ENCODE measurements at regions of chr11 and their contacts with region 1.

Region 1: DNA sequence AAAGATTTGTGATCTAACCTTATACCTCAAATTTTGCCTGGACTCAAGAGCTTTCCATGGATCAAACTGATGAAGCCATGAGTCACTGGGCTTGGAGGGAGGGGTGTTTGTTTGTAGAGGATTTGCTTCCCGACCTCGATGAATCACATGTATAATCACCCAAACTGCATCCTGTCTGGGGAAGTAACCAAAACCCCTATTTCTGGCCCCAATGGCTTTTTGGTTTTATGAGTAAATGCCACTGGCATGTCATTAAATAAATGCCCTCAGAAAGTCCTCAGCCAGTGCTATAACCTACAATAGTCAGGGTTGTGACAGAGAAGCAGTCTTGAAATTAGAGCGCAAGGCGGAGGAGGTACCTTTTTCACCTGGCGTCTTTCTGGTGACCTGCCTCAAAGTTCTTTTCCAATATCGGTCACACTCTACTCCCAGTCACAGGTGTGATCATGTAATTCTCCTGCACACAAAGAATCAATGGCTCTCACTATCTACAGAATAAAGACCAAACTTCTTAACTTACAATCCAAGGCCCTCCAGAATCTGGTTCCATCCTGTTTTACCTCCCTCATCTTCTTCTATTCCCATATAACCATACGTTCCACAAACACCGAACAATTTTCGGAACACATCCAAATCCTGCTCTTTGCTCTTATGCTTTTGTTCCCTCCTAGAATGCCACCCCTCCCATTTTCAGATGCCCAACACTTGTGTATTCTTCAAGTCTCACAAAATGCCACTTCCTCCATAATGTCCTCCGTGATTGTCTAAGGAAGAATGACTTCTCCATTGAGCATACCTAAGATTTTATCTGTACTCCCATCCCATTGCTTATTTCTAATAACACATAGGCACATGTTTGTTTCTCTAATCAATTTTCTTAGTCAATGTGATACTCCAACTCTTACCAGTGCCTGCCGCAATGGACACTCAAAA is 81.3 kb upstream of the BLID start:
- DNase-seq: peak; percentile 99
- ATAC-seq: peak; percentile 79
- H3K4me3 ChIP-seq: no peak overlapping the region
- H3K27ac ChIP-seq: peak overlapping the region; percentile 97
- H3K4me1 ChIP-seq: peaks cover 30% of the 10 kb centered on the region
- H3K27me3 ChIP-seq: no peaks in the 10 kb centered on the region
- CTCF ChIP-seq: no peak
- POLR2A ChIP-seq: 0 out of 2 replicates have a peak, but pooled peaks have one; percentile 36
- RAD21 ChIP-seq: no peak

Region 2: GRCh38 chr11:122167100-122167499 is 30.2 kb before region 1 on chr11:
- CTCF ChIA-PET with region 1: interaction called, 10 read pairs
- POLR2A ChIA-PET with region 1: interaction called, 4 read pairs
- dilution Hi-C with region 1: no loop called
- in situ Hi-C with region 1: no loop called
- intact Hi-C with region 1: loop called (anchors 5 kb)
- DNase-seq: peak; percentile 85
- ATAC-seq: peak; percentile 10
- H3K4me3 ChIP-seq: no peak overlapping the region
- H3K27ac ChIP-seq: peak overlapping the region; percentile 48; the same call in 1 of the 2 replicates
- H3K4me1 ChIP-seq: peaks cover 35% of the 10 kb centered on the region
- H3K27me3 ChIP-seq: no peaks in the 10 kb centered on the region
- CTCF ChIP-seq: no peak
- POLR2A ChIP-seq: no peak
- RAD21 ChIP-seq: no peak

Region 3: GRCh38 chr11:122179961-122180834 is 17.1 kb before region 1 on chr11:
- CTCF ChIA-PET with region 1: interaction called, 7 read pairs
- POLR2A ChIA-PET with region 1: interaction called, 22 read pairs
- dilution Hi-C with region 1: no loop called
- in situ Hi-C with region 1: no loop called
- intact Hi-C with region 1: loop called (anchors 2 kb)
- DNase-seq: peak; percentile 98
- ATAC-seq: peak; percentile 86
- H3K4me3 ChIP-seq: peak overlapping the region; percentile 61
- H3K27ac ChIP-seq: peak overlapping the region; percentile 93
- H3K4me1 ChIP-seq: peaks cover 15% of the 10 kb centered on the region
- H3K27me3 ChIP-seq: no peaks in the 10 kb centered on the region
- CTCF ChIP-seq: no peak
- POLR2A ChIP-seq: peak; percentile 77; the same call in 1 of the 2 replicates
- RAD21 ChIP-seq: no peak